Activated CD4-positive, alpha-beta T cell treated with anti-CD3 and anti-CD28 coated beads for 36 hours (primary cell): ENCODE measurements at regions of chr5 and their contacts with region 1.

Region 1: GRCh38 chr5:172770675-172771438 is at the start of gene DUSP1:
- DNase-seq: peak; percentile 99
- ATAC-seq: peak; percentile 60
- H3K4me3 Mint-ChIP-seq: peak within 1 kb of the TSS; percentile 82
- H3K27ac Mint-ChIP-seq: peak within 1 kb of the TSS; percentile 97
- H3K4me1 Mint-ChIP-seq: peaks cover 67% of the 10 kb centered on the region
- H3K27me3 Mint-ChIP-seq: no peaks in the 10 kb centered on the region
- total RNA-seq, gene DUSP1: 6.7 to 7.4 TPM

Region 2: GRCh38 chr5:171387345-171387969 is 1383.4 kb before region 1 on chr5 and contains the start of gene NPM1:
- CTCF ChIA-PET with region 1: no interaction called
- POLR2A ChIA-PET with region 1: no interaction called
- intact Hi-C with region 1: loop called in 1 of 2 experiments (anchors 5 kb)
- DNase-seq: peak; percentile 99
- ATAC-seq: peak; percentile 83
- H3K4me3 Mint-ChIP-seq: peak within 1 kb of the TSS; percentile 88
- H3K27ac Mint-ChIP-seq: peak within 1 kb of the TSS; percentile 99
- H3K4me1 Mint-ChIP-seq: peaks cover 37% of the 10 kb centered on the region
- H3K27me3 Mint-ChIP-seq: no peaks in the 10 kb centered on the region
- total RNA-seq, gene NPM1: 3,156 to 3,905 TPM

Region 3: GRCh38 chr5:172106511-172107356 is 664.1 kb before region 1 on chr5:
- CTCF ChIA-PET with region 1: no interaction called
- POLR2A ChIA-PET with region 1: no interaction called
- intact Hi-C with region 1: loop called in 1 of 2 experiments (anchors 10 kb)
- DNase-seq: peak; percentile 79
- ATAC-seq: no peak
- H3K4me3 Mint-ChIP-seq: no peak overlapping the region
- H3K27ac Mint-ChIP-seq: peak overlapping the region; percentile 73
- H3K4me1 Mint-ChIP-seq: peaks cover 61% of the 10 kb centered on the region
- H3K27me3 Mint-ChIP-seq: no peaks in the 10 kb centered on the region

Region 4: GRCh38 chr5:172714491-172715421 is 56.1 kb before region 1 on chr5:
- CTCF ChIA-PET with region 1: interaction called, 16 read pairs
- POLR2A ChIA-PET with region 1: interaction called, 3 read pairs
- intact Hi-C with region 1: loop called (anchors 1 to 2 kb)
- DNase-seq: peak; percentile 82
- ATAC-seq: peak; percentile 84
- H3K4me3 Mint-ChIP-seq: no peak overlapping the region
- H3K27ac Mint-ChIP-seq: no peak overlapping the region
- H3K4me1 Mint-ChIP-seq: peaks cover 6% of the 10 kb centered on the region
- H3K27me3 Mint-ChIP-seq: peaks cover 5% of the 10 kb centered on the region

Region 5: GRCh38 chr5:172833686-172834414 is 63.0 kb after region 1 on chr5 and contains the start of gene ERGIC1:
- CTCF ChIA-PET with region 1: interaction called, 3 read pairs
- POLR2A ChIA-PET with region 1: interaction called, 4 read pairs
- intact Hi-C with region 1: loop called in 1 of 2 experiments (anchors 2 kb)
- DNase-seq: peak; percentile 79
- ATAC-seq: peak; percentile 77
- H3K4me3 Mint-ChIP-seq: peak within 1 kb of the TSS; percentile 79
- H3K27ac Mint-ChIP-seq: peak within 1 kb of the TSS; percentile 84
- H3K4me1 Mint-ChIP-seq: peaks cover 42% of the 10 kb centered on the region
- H3K27me3 Mint-ChIP-seq: no peaks in the 10 kb centered on the region
- total RNA-seq, gene ERGIC1: 40.3 to 50.0 TPM

Region 6: DNA sequence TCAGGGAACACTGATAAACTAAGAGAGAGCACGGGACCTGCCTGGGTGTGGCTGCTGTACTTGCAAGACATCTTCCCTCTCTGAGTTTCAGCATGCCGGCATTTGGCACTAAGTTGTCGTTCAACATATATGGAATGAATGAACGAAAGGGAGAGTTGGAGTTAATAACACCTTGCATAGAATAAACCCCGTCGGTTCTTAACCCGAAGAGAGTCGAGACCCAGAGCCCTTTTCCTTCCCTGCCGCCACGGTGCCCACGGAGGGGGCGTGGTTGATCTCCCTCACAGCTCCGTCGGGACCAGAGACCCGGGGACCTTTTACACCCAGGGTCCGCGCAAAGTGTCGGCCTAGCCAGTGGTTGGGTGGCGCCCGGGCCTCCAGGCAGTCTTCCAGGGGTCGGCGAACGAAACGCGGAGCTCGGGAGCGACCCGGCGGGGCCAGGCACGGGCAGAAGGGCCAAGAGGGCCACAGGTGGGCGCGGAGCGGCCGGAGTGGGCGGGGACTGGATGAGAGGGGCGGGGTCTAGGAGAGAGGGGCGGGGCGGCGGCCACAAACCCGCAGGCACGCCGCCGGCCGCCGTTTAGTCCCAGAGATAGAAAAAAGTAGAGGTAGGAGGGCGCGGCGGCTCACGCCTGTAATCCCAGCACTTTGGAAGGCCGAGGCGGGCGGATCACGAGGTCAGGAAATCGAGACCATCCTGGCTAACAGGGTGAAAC is 187.6 kb after region 1 on chr5:
- CTCF ChIA-PET with region 1: interaction called, 5 read pairs
- POLR2A ChIA-PET with region 1: no interaction called
- intact Hi-C with region 1: loop called (anchors 2 kb)
- DNase-seq: peak; percentile 83
- ATAC-seq: peak; percentile 76
- H3K4me3 Mint-ChIP-seq: peak overlapping the region; percentile 93
- H3K27ac Mint-ChIP-seq: peak overlapping the region; percentile 94
- H3K4me1 Mint-ChIP-seq: peaks cover 17% of the 10 kb centered on the region
- H3K27me3 Mint-ChIP-seq: no peaks in the 10 kb centered on the region

Region 7: GRCh38 chr5:173887610-173888472 is 1117.0 kb after region 1 on chr5 and contains the start of gene CPEB4:
- CTCF ChIA-PET with region 1: no interaction called
- POLR2A ChIA-PET with region 1: no interaction called
- intact Hi-C with region 1: loop called in 1 of 2 experiments (anchors 10 kb)
- DNase-seq: peak; percentile 98
- ATAC-seq: peak; percentile 96
- H3K4me3 Mint-ChIP-seq: peak within 1 kb of the TSS; percentile 96
- H3K27ac Mint-ChIP-seq: peak within 1 kb of the TSS; percentile 98
- H3K4me1 Mint-ChIP-seq: peaks cover 67% of the 10 kb centered on the region
- H3K27me3 Mint-ChIP-seq: no peaks in the 10 kb centered on the region
- total RNA-seq, gene CPEB4: 5.6 to 8.3 TPM